Naive thymus-derived CD4-positive, alpha-beta T cell (primary cell): ENCODE measurements at regions of chr1 and their contacts with region 1.

Region 1: DNA sequence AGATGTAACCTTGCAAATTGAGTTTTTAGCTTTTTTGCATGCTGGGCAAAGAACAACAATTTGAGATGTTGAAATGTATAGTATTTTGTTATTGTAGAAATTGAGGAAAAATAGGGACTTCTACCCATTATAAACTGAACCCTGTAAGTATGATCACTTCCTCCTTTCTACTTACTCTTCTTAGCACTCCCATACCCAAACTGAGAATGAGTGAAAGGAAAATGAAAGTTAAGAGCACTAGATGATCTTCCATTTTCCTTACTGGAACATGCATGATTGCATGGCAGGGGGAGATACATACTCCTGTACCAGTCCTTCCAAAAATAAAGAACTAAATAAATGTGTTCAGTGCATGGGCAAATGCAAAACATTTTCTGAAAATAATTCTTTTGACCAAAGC is 107.4 kb upstream of the KIAA1614 start:
- DNase-seq: no peak
- ATAC-seq: no peak
- H3K4me3 ChIP-seq: no peak overlapping the region
- H3K4me3 Mint-ChIP-seq: peak overlapping the region in 1 of 10 donors; percentile 29
- H3K27ac ChIP-seq: no peak overlapping the region
- H3K27ac Mint-ChIP-seq: no peak overlapping the region
- H3K4me1 ChIP-seq: no peaks in the 10 kb centered on the region
- H3K4me1 Mint-ChIP-seq: peaks cover 0 to 6% (median 0%) of the 10 kb centered on the region in 7 donors
- H3K27me3 ChIP-seq: no peaks in the 10 kb centered on the region
- H3K27me3 Mint-ChIP-seq: no peaks in the 10 kb centered on the region

Region 2: GRCh38 chr1:180101411-180101810 is 703.9 kb before region 1 on chr1:
- CTCF ChIA-PET with region 1: no interaction called
- POLR2A ChIA-PET with region 1: no interaction called
- intact Hi-C with region 1: no loop called
- DNase-seq: no peak
- ATAC-seq: no peak
- H3K4me3 ChIP-seq: no peak overlapping the region
- H3K4me3 Mint-ChIP-seq: no peak overlapping the region
- H3K27ac ChIP-seq: no peak overlapping the region
- H3K27ac Mint-ChIP-seq: peak overlapping the region in 2 of 9 donors; percentile 11 to 66
- H3K4me1 ChIP-seq: peaks cover 0 to 5% of the 10 kb centered on the region in 2 donors
- H3K4me1 Mint-ChIP-seq: peaks cover 0 to 11% (median 0%) of the 10 kb centered on the region in 7 donors
- H3K27me3 ChIP-seq: no peaks in the 10 kb centered on the region
- H3K27me3 Mint-ChIP-seq: no peaks in the 10 kb centered on the region

Region 3: DNA sequence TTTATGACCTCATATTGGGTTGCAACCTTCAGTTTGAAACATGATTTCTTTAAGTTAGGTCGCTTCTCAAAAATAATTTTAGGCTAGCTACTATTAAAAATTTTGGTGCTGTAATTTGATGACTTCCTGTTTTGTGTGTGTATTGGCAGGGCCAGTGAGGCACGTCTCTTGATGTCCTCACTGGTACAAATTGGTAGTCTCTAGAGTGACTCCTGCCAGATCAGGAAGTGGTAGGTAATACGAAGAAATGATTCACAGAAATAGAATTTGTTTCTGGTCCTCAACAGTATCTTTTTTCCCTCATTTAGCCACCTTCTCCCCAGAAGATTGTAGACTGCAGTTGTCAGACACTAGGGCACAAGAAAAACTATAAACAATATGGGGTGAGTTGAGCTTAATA is 13.5 kb before region 1 on chr1:
- CTCF ChIA-PET with region 1: no interaction called
- POLR2A ChIA-PET with region 1: no interaction called
- intact Hi-C with region 1: loop called in 1 of 2 experiments (anchors 2 kb)
- DNase-seq: no peak
- ATAC-seq: no peak
- H3K4me3 ChIP-seq: no peak overlapping the region
- H3K4me3 Mint-ChIP-seq: no peak overlapping the region
- H3K27ac ChIP-seq: no peak overlapping the region
- H3K27ac Mint-ChIP-seq: no peak overlapping the region
- H3K4me1 ChIP-seq: no peaks in the 10 kb centered on the region
- H3K4me1 Mint-ChIP-seq: peaks cover 4 to 25% (median 17%) of the 10 kb centered on the region in 7 donors
- H3K27me3 ChIP-seq: no peaks in the 10 kb centered on the region
- H3K27me3 Mint-ChIP-seq: no peaks in the 10 kb centered on the region

Region 4: DNA sequence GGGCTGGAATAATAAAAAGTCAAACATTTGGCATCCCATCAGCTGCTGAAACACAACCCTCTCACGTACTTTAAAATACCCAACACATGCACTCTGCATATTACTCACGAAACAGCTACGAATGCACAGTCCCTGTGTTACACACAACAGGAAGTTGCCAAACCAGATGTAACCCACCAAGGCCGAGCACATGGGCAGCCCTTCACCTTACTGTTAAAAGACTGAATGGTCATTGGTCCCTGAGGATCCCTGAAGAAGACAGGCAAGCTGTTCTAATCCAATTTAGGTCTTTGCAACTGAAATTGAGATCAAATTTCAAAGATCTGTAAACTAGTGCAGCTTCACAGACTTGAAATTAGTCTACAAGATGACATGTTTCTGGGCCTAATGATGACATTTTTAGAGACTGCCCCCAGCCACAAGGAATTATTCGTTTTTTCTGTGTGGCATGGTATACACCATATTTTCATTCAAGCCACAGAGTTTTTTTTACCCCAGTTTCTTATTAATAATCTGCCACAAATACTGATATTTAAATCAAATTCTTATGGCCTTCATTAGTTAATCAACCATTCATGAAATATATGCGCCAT is 257.6 kb after region 1 on chr1:
- CTCF ChIA-PET with region 1: no interaction called
- POLR2A ChIA-PET with region 1: no interaction called
- intact Hi-C with region 1: no loop called
- DNase-seq: peak in 3 of 9 donors; percentile 19 to 42 (median 30)
- ATAC-seq: peak; percentile 81
- H3K4me3 ChIP-seq: peak overlapping the region; percentile 33
- H3K4me3 Mint-ChIP-seq: peak overlapping the region; percentile 59 to 81 (median 74)
- H3K27ac ChIP-seq: no peak overlapping the region
- H3K27ac Mint-ChIP-seq: peak overlapping the region; percentile 43 to 95 (median 85)
- H3K4me1 ChIP-seq: peaks cover 6 to 8% of the 10 kb centered on the region in 2 donors
- H3K4me1 Mint-ChIP-seq: peaks cover 14 to 26% (median 22%) of the 10 kb centered on the region in 7 donors
- H3K27me3 ChIP-seq: no peaks in the 10 kb centered on the region
- H3K27me3 Mint-ChIP-seq: no peaks in the 10 kb centered on the region